Kidney (tissue), 22 donors: ENCODE measurements at regions of chr6 and their contacts with region 1.

Region 1: DNA sequence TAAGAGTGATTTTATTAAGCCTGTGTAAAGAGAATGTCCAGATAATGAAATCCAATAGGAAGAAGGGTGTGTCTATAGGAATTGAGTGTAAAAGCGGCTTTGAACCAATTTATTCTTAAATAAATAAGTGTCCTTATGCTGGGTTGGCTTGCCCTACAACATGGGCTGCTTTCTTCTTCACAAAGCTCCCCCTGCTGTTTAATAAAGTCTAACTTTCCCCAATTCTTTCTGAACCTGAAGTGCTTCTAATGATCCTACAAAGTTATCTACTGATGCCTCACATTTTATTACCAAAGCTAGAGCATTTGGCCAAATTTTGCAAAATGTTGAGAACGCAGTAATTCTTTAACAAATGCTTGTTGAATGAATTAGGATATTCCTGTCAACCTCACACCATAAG is 36.3 kb upstream of the SIRT5 start:
- DNase-seq: peak in 2 of 5 donors; percentile 44 to 71
- H3K4me3 ChIP-seq: no peak overlapping the region
- H3K27ac ChIP-seq: no peak overlapping the region
- H3K4me1 ChIP-seq: no peaks in the 10 kb centered on the region
- H3K27me3 ChIP-seq: no peaks in the 10 kb centered on the region
- CTCF ChIP-seq: peak; percentile 52

Region 2: GRCh38 chr6:13336553-13336952 is 201.5 kb before region 1 on chr6:
- intact Hi-C with region 1: loop called (anchors 10 kb)
- DNase-seq: peak; percentile 80 to 89 (median 85)
- H3K4me3 ChIP-seq: no peak overlapping the region
- H3K27ac ChIP-seq: no peak overlapping the region
- H3K4me1 ChIP-seq: peaks cover 0 to 2% (median 0%) of the 10 kb centered on the region in 3 donors
- H3K27me3 ChIP-seq: no peaks in the 10 kb centered on the region
- CTCF ChIP-seq: peak; percentile 97